PC-3 (cell line): ENCODE measurements at regions of chr11 and their contacts with region 1.

Region 1: GRCh38 chr11:62497132-62497915 is 49.3 kb downstream of the AHNAK start:
- DNase-seq: peak; percentile 87
- ATAC-seq: peak; percentile 85
- H3K4me3 ChIP-seq: no peak overlapping the region
- H3K27ac ChIP-seq: peak overlapping the region; percentile 26
- H3K4me1 ChIP-seq: peaks cover 34% of the 10 kb centered on the region
- H3K27me3 ChIP-seq: no peaks in the 10 kb centered on the region
- CTCF ChIP-seq: peak; percentile 93

Region 2: DNA sequence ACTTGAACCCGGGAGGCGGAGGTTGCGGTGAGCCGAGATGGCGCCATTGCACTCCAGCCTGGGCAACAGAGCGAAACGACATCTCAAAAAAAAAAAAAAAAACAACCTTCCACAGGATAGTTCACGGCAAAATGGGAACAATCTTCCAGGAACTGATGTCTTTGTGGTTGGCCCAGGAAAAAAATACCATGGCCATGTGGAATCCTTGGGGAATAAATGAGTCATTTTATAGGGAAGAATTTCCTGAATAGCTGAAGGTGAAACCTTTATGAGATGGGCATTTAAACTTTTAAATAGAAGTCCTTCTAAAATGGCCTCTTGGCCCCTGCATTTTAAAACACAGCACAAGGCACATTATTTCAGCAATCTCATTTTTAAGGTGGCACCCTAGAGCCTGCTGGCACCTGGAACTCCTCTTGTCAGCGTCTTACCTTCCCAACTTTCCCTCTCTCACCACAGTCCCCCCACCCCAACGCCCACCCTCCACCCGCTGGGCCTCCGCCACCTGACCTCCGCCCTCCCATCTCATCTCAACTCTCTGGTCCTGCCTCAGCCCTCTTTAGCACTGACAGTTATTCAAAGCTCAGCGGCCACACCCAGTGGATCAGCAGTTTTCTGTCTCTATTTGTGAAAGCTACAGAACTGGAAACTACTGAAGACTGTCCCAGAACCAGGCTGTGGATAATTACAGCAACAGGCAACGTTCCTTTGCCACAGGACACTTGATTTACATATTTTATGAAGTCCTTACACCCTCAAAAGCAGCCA is 35.4 kb before region 1 on chr11:
- CTCF ChIA-PET with region 1: no interaction called
- POLR2A ChIA-PET with region 1: no interaction called
- intact Hi-C with region 1: no loop called
- DNase-seq: peak; percentile 88
- ATAC-seq: peak; percentile 79
- H3K4me3 ChIP-seq: no peak overlapping the region
- H3K27ac ChIP-seq: peak overlapping the region; percentile 61
- H3K4me1 ChIP-seq: peaks cover 15% of the 10 kb centered on the region
- H3K27me3 ChIP-seq: no peaks in the 10 kb centered on the region
- CTCF ChIP-seq: no peak

Region 3: DNA sequence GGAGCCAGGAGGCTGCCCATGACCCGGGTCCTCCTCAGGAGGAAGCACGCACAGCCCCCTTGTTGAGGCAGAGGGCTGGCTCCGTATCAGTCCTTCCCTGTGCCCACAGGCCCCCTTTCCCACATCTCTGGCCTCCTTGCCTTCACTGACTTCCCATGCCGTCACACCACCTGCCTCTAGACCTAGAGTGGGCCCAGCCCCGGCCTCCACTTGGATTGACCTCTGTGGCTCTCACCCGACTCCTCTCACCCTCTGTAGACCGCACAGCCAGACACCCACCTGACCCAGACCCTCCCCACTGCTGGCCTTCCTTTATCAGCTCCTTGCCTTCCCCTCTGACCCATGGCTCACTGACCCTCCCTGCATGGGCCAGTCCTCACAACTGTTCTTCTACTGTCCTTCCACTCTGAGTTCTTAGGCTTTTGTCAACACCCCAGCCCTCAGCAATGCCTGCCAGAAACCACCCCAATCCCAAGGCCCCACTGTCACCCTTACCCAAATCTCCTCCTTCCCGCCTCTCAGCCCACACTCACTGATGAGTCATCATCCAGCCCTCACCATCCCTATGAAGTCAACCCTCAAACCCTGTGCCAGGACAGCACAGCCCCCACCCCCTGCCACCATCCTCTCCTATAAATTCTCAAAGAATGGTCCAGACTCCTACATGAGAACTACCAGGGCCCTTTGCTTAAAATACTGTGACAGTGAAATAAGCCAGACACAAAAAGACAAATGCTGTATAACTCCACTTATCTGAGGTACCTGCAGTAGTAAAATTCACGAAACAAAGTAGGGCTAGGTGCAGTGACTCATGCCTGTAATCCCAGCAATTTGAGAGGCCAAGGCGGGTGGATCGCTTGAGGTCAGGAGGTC is 25.1 kb before region 1 on chr11:
- CTCF ChIA-PET with region 1: interaction called, 11 read pairs
- POLR2A ChIA-PET with region 1: no interaction called
- intact Hi-C with region 1: no loop called
- DNase-seq: peak; percentile 92
- ATAC-seq: peak; percentile 95
- H3K4me3 ChIP-seq: peak overlapping the region; percentile 4; the same call in 1 of the 2 replicates
- H3K27ac ChIP-seq: peak overlapping the region; percentile 90
- H3K4me1 ChIP-seq: peaks cover 18% of the 10 kb centered on the region
- H3K27me3 ChIP-seq: no peaks in the 10 kb centered on the region
- CTCF ChIP-seq: no peak

Region 4: GRCh38 chr11:62508268-62509058 is 11.1 kb after region 1 on chr11:
- CTCF ChIA-PET with region 1: interaction called, 5 read pairs
- POLR2A ChIA-PET with region 1: no interaction called
- intact Hi-C with region 1: loop called (anchors 1 kb)
- DNase-seq: peak; percentile 85
- ATAC-seq: peak; percentile 83
- H3K4me3 ChIP-seq: peak overlapping the region; percentile 32
- H3K27ac ChIP-seq: peak overlapping the region; percentile 53
- H3K4me1 ChIP-seq: peaks cover 25% of the 10 kb centered on the region
- H3K27me3 ChIP-seq: no peaks in the 10 kb centered on the region
- CTCF ChIP-seq: peak; percentile 75

Region 5: DNA sequence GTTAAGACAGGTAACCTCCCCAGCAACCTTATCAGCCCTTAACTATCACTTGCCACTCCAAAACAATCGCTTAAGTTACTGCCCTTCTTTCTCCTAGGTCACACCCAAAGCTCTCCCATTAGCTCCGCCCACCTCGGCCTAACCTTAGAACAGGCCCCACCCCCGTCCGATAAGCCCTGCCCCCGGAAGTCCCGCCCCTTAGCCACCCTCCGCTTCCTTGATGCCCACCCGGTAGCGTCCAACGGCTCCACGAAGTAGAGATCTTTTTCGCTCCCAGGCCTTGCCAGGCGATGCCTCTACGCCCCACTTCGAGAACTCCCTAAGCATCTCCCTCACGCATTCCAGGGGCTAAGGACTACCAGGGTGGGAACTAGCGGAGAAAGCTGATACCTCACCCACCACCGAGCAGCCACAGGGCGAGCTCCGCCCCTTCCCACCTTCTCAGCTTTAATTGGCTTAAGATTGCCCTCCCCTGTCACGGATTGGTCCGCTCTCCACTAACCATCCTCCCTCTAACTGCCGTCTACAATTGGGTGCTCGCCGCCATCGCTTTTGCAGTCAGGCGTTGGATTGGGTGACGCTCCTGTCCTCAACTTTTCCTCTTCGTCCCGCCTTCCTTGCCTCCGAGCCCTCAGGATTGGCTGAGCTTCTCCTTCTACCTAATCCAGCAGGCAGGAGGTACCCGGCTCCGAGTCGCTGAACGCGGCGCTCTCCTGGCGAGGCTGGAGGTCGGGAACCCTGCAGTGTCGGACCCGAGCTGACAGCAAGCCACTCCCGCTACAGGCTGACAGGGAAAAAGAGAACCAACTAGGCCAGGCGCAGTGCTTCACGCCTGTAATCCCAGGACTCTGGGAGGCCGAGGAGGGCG is 256.6 kb after region 1 on chr11 and contains the start of gene ZBTB3:
- CTCF ChIA-PET with region 1: no interaction called
- POLR2A ChIA-PET with region 1: no interaction called
- intact Hi-C with region 1: no loop called
- DNase-seq: peak; percentile 99
- ATAC-seq: peak; percentile 98
- H3K4me3 ChIP-seq: peak within 1 kb of the TSS; percentile 87
- H3K27ac ChIP-seq: peak within 1 kb of the TSS; percentile 73
- H3K4me1 ChIP-seq: peaks cover 16% of the 10 kb centered on the region
- H3K27me3 ChIP-seq: no peaks in the 10 kb centered on the region
- CTCF ChIP-seq: no peak
- total RNA-seq, gene ZBTB3: 2.2 and 3.3 TPM in 2 replicates